Panc1 (cell line): ENCODE measurements at regions of chr5 and their contacts with region 1.

Region 1: GRCh38 chr5:76818844-76819831 is at the start of gene F2RL1:
- DNase-seq: no peak
- ATAC-seq: peak; percentile 82
- H3K4me3 ChIP-seq: peak within 1 kb of the TSS; percentile 62 to 70
- H3K27ac ChIP-seq: peak within 1 kb of the TSS; percentile 92
- H3K4me1 ChIP-seq: peaks cover 39% of the 10 kb centered on the region
- H3K27me3 ChIP-seq: no peaks in the 10 kb centered on the region
- CTCF ChIP-seq: no peak
- total RNA-seq, gene F2RL1: 65.9 TPM

Region 2: GRCh38 chr5:76679231-76679630 is 139.9 kb before region 1 on chr5:
- CTCF ChIA-PET with region 1: no interaction called
- POLR2A ChIA-PET with region 1: interaction called, 10 read pairs
- in situ Hi-C with region 1: no loop called
- intact Hi-C with region 1: no loop called
- DNase-seq: no peak
- ATAC-seq: no peak
- H3K4me3 ChIP-seq: no peak overlapping the region
- H3K27ac ChIP-seq: no peak overlapping the region
- H3K4me1 ChIP-seq: no peaks in the 10 kb centered on the region
- H3K27me3 ChIP-seq: no peaks in the 10 kb centered on the region
- CTCF ChIP-seq: no peak

Region 3: GRCh38 chr5:76790632-76791290 is 28.4 kb before region 1 on chr5:
- CTCF ChIA-PET with region 1: interaction called, 10 read pairs
- POLR2A ChIA-PET with region 1: no interaction called
- in situ Hi-C with region 1: no loop called
- intact Hi-C with region 1: no loop called
- DNase-seq: peak; percentile 98
- ATAC-seq: peak; percentile 89
- H3K4me3 ChIP-seq: no peak overlapping the region
- H3K27ac ChIP-seq: peak overlapping the region; percentile 91
- H3K4me1 ChIP-seq: peaks cover 22% of the 10 kb centered on the region
- H3K27me3 ChIP-seq: no peaks in the 10 kb centered on the region
- CTCF ChIP-seq: no peak

Region 4: GRCh38 chr5:76805850-76806505 is 13.2 kb before region 1 on chr5:
- CTCF ChIA-PET with region 1: interaction called, 14 read pairs
- POLR2A ChIA-PET with region 1: interaction called, 14 read pairs
- in situ Hi-C with region 1: no loop called
- intact Hi-C with region 1: no loop called
- DNase-seq: peak; percentile 96
- ATAC-seq: peak; percentile 86
- H3K4me3 ChIP-seq: peak overlapping the region; percentile 11 to 52
- H3K27ac ChIP-seq: peak overlapping the region; percentile 77
- H3K4me1 ChIP-seq: peaks cover 54% of the 10 kb centered on the region
- H3K27me3 ChIP-seq: no peaks in the 10 kb centered on the region
- CTCF ChIP-seq: no peak